HEK293 (cell line): ENCODE measurements at regions of chr16 and their contacts with region 1.

Region 1: GRCh38 chr16:89972244-89973234 is 24.0 kb downstream of the DEF8 start:
- H3K4me3 ChIP-seq: peak overlapping the region; percentile 100
- H3K27ac ChIP-seq: peak overlapping the region; percentile 90
- H3K4me1 ChIP-seq: 0 out of 2 replicates have a peak, but pooled peaks cover 3% of the 10 kb centered on the region
- CTCF ChIP-seq: peak; percentile 77

Region 2: GRCh38 chr16:89785523-89786155 is 186.9 kb before region 1 on chr16:
- CTCF ChIA-PET with region 1: no interaction called
- POLR2A ChIA-PET with region 1: no interaction called
- H3K4me3 ChIP-seq: no peak overlapping the region
- H3K27ac ChIP-seq: no peak overlapping the region
- H3K4me1 ChIP-seq: no peaks in the 10 kb centered on the region
- CTCF ChIP-seq: no peak

Region 3: GRCh38 chr16:89898201-89898967 is 74.2 kb before region 1 on chr16:
- CTCF ChIA-PET with region 1: no interaction called
- POLR2A ChIA-PET with region 1: no interaction called
- H3K4me3 ChIP-seq: no peak overlapping the region
- H3K27ac ChIP-seq: no peak overlapping the region
- H3K4me1 ChIP-seq: no peaks in the 10 kb centered on the region
- CTCF ChIP-seq: no peak

Region 4: GRCh38 chr16:89985219-89985618 is 12.7 kb after region 1 on chr16:
- CTCF ChIA-PET with region 1: no interaction called
- POLR2A ChIA-PET with region 1: interaction called, 11 read pairs
- H3K4me3 ChIP-seq: no peak overlapping the region
- H3K27ac ChIP-seq: no peak overlapping the region
- H3K4me1 ChIP-seq: no peaks in the 10 kb centered on the region
- CTCF ChIP-seq: no peak

Region 5: GRCh38 chr16:90035902-90036301 is 63.4 kb after region 1 on chr16:
- CTCF ChIA-PET with region 1: no interaction called
- POLR2A ChIA-PET with region 1: interaction called, 11 read pairs
- H3K4me3 ChIP-seq: no peak overlapping the region
- H3K27ac ChIP-seq: no peak overlapping the region
- H3K4me1 ChIP-seq: no peaks in the 10 kb centered on the region
- CTCF ChIP-seq: no peak